Activated B cell treated with CpG ODN at 0.5 μM for 24 hours (primary cell): ENCODE measurements at regions of chr18 and their contacts with region 1.

Region 1: DNA sequence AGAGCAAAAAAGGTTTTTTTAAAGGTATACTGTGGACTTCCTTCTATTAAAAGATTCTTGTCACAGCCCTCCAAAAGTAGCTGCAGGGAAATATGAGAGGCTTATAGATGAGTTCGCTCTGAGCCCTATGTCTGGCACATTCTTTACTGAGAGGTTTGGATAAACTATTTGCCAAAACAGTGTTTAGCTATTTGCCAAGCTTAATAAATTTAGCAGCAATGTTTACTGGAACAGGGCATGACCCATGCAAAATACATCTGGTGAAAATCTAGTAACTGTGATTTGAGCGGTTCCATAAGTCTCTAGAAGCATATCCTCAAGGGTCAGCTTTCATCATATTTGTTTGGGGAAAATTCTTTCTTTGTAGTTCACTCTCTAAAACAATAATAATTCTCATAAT is 1696.7 kb upstream of the PIK3C3 start:
- DNase-seq: no peak
- ATAC-seq: no peak
- H3K4me3 Mint-ChIP-seq: no peak overlapping the region
- H3K27ac Mint-ChIP-seq: no peak overlapping the region
- H3K4me1 Mint-ChIP-seq: no peaks in the 10 kb centered on the region
- H3K27me3 Mint-ChIP-seq: no peaks in the 10 kb centered on the region
- CTCF ChIP-seq: no peak

Region 2: DNA sequence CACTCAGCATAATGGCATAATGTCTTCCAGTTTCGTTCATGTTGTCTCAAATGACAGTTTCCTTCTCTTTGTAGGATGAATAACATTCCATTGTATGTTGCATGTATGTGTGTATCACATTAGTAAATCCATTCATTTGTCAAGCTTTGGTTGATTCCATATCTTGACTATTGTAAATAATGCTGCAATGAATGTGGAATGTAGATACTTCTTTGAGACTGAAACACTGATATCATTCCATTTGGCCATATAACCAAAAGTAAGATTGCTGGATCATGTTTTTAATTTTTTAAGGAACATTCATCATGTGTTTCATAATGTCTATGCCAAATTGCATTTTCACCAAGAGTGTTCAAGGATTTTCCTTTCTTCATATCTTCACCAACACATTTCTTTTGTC is 14.7 kb before region 1 on chr18:
- CTCF ChIA-PET with region 1: no interaction called
- POLR2A ChIA-PET with region 1: no interaction called
- intact Hi-C with region 1: no loop called
- DNase-seq: no peak
- ATAC-seq: no peak
- H3K4me3 Mint-ChIP-seq: no peak overlapping the region
- H3K27ac Mint-ChIP-seq: no peak overlapping the region
- H3K4me1 Mint-ChIP-seq: no peaks in the 10 kb centered on the region
- H3K27me3 Mint-ChIP-seq: no peaks in the 10 kb centered on the region
- CTCF ChIP-seq: no peak

Region 3: DNA sequence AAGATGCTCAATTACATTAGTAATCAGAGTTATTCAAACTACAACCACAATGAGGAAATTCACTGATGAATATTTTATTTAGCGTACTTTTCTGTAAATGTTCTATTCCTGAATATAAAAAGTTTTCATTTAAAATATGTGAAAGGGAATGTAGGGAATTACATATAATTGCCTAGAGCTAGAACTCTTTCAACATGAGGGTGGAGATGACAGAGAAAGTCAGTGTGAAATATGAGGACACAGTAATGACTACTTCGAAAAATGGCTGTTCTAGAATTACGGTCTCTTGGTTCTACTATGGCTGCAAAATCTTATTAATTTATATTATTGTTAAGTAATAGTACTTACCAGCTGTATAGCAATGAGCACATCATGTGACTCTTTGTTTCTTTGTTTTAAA is 49.3 kb after region 1 on chr18:
- CTCF ChIA-PET with region 1: no interaction called
- POLR2A ChIA-PET with region 1: no interaction called
- intact Hi-C with region 1: loop called (anchors 1 kb)
- DNase-seq: no peak
- ATAC-seq: no peak
- H3K4me3 Mint-ChIP-seq: no peak overlapping the region
- H3K27ac Mint-ChIP-seq: no peak overlapping the region
- H3K4me1 Mint-ChIP-seq: no peaks in the 10 kb centered on the region
- H3K27me3 Mint-ChIP-seq: no peaks in the 10 kb centered on the region
- CTCF ChIP-seq: no peak

Region 4: GRCh38 chr18:41162191-41162590 is 903.9 kb after region 1 on chr18:
- CTCF ChIA-PET with region 1: no interaction called
- POLR2A ChIA-PET with region 1: no interaction called
- intact Hi-C with region 1: loop called (anchors 5 kb)
- DNase-seq: no peak
- ATAC-seq: no peak
- H3K4me3 Mint-ChIP-seq: no peak overlapping the region
- H3K27ac Mint-ChIP-seq: no peak overlapping the region
- H3K4me1 Mint-ChIP-seq: no peaks in the 10 kb centered on the region
- H3K27me3 Mint-ChIP-seq: no peaks in the 10 kb centered on the region
- CTCF ChIP-seq: no peak